IMR-90 (cell line): ENCODE measurements at regions of chr2 and their contacts with region 1.

Region 1: GRCh38 chr2:26139269-26140183 is 33.4 kb upstream of the GAREM2 start:
- DNase-seq: no peak
- ATAC-seq: no peak
- H3K4me3 ChIP-seq: no peak overlapping the region
- H3K27ac ChIP-seq: no peak overlapping the region
- H3K4me1 ChIP-seq: no peaks in the 10 kb centered on the region
- H3K27me3 ChIP-seq: no peaks in the 10 kb centered on the region
- CTCF ChIP-seq: no peak
- POLR2A ChIP-seq: no peak
- RAD21 ChIP-seq: no peak

Region 2: DNA sequence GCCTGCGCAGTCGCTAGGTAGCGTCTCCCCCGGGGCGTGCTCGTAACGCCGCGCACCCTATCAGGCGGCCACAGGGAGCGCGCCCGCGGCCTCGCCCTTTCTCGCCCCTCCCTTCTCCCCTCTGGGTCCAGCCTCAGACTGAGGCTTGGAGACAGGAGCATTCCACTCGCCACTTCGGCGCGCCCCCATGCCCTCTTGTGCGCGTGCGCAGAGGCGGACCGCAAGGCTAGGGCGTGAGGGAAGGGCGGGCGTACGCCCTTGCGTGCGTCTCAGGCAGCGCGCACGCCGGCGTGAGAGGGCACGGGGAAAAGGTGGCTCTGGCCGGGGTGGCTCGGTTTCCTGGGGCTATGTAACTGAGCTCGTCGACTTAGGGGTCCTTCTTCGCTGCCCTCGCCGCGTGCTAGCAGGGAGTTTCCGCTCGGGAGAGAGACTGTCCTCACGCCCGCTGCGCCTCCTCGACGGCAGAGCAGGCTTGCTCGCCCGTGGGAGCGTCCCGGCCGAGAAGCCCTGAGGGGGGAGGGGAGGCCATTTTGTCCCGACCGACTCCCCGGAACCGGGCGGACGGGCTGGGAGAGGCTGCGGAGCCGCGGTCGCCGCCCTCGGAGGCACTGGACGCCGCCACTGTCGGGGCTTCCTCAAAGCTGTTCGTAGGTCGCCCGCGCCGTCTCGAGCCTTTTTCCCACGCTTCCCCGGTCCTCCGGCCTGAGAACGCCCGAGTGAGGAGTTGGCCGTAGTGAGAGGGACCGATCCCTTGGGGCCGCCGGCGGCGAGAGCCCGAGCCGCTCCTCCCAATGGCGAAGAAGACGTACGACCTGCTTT is 105.5 kb before region 1 on chr2 and contains the start of gene RAB10:
- CTCF ChIA-PET with region 1: interaction called, 3 read pairs
- POLR2A ChIA-PET with region 1: no interaction called
- dilution Hi-C with region 1: no loop called
- in situ Hi-C with region 1: no loop called
- intact Hi-C with region 1: loop called (anchors 5 kb)
- DNase-seq: peak; percentile 98
- ATAC-seq: peak; percentile 97
- H3K4me3 ChIP-seq: peak within 1 kb of the TSS; percentile 86
- H3K27ac ChIP-seq: peak within 1 kb of the TSS; percentile 91
- H3K4me1 ChIP-seq: no peaks in the 10 kb centered on the region
- H3K27me3 ChIP-seq: no peaks in the 10 kb centered on the region
- CTCF ChIP-seq: 0 out of 2 replicates have a peak, but pooled peaks have one; percentile 2
- POLR2A ChIP-seq: peak; percentile 90
- RAD21 ChIP-seq: no peak
- total RNA-seq, gene RAB10: 30.1 and 79.7 TPM in 2 replicates

Region 3: GRCh38 chr2:26099933-26100332 is 39.6 kb before region 1 on chr2:
- CTCF ChIA-PET with region 1: no interaction called
- POLR2A ChIA-PET with region 1: no interaction called
- dilution Hi-C with region 1: no loop called
- in situ Hi-C with region 1: no loop called
- intact Hi-C with region 1: no loop called
- DNase-seq: no peak
- ATAC-seq: no peak
- H3K4me3 ChIP-seq: no peak overlapping the region
- H3K27ac ChIP-seq: no peak overlapping the region
- H3K4me1 ChIP-seq: peaks cover 3% of the 10 kb centered on the region
- H3K27me3 ChIP-seq: no peaks in the 10 kb centered on the region
- CTCF ChIP-seq: no peak
- POLR2A ChIP-seq: no peak
- RAD21 ChIP-seq: no peak

Region 4: GRCh38 chr2:26911911-26912861 is 772.7 kb after region 1 on chr2:
- CTCF ChIA-PET with region 1: no interaction called
- POLR2A ChIA-PET with region 1: no interaction called
- dilution Hi-C with region 1: no loop called
- in situ Hi-C with region 1: no loop called
- intact Hi-C with region 1: no loop called
- DNase-seq: no peak
- ATAC-seq: peak; percentile 65
- H3K4me3 ChIP-seq: no peak overlapping the region
- H3K27ac ChIP-seq: no peak overlapping the region
- H3K4me1 ChIP-seq: no peaks in the 10 kb centered on the region
- H3K27me3 ChIP-seq: peaks cover 77% of the 10 kb centered on the region
- CTCF ChIP-seq: no peak
- POLR2A ChIP-seq: no peak
- RAD21 ChIP-seq: no peak